SK-N-SH (cell line): ENCODE measurements at regions of chr4 and their contacts with region 1.

Region 1: GRCh38 chr4:105520817-105521790 is 31.3 kb upstream of the ARHGEF38 start:
- DNase-seq: peak; percentile 69
- H3K4me3 ChIP-seq: no peak overlapping the region; a peak in 1 of 4 replicates
- H3K27ac ChIP-seq: no peak overlapping the region
- H3K4me1 ChIP-seq: no peaks in the 10 kb centered on the region
- H3K27me3 ChIP-seq: no peaks in the 10 kb centered on the region
- CTCF ChIP-seq: peak; percentile 78
- EP300 ChIP-seq: no peak
- RAD21 ChIP-seq: peak; percentile 78

Region 2: DNA sequence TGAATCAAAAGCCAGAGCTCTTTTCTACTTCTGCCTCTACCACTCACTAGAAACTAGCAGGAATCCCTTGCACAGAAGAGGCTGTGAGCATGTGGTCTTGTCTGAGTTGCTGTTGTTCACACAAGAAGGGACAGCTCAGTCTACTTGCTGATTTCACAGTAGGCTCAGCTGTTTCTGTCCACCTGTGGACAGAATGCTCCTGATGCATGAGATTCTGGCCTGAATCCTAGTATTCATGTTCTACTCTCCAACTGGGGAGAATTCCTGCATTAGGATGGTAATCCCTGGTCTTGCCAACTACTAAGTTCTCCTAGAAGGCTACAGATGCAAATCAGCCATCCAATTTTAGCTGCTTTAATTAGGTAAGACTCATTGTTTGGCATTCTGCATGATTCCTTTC is 160.1 kb before region 1 on chr4:
- CTCF ChIA-PET with region 1: no interaction called
- POLR2A ChIA-PET with region 1: no interaction called
- DNase-seq: no peak
- H3K4me3 ChIP-seq: no peak overlapping the region
- H3K27ac ChIP-seq: no peak overlapping the region
- H3K4me1 ChIP-seq: peaks cover 0 to 10% of the 10 kb centered on the region in 2 experiments; a peak in 2 of 4 replicates
- H3K27me3 ChIP-seq: no peaks in the 10 kb centered on the region
- CTCF ChIP-seq: no peak
- EP300 ChIP-seq: no peak
- RAD21 ChIP-seq: no peak

Region 3: GRCh38 chr4:105666693-105667092 is 145.6 kb after region 1 on chr4:
- CTCF ChIA-PET with region 1: interaction called, 27 read pairs
- POLR2A ChIA-PET with region 1: no interaction called
- DNase-seq: no peak
- H3K4me3 ChIP-seq: no peak overlapping the region
- H3K27ac ChIP-seq: no peak overlapping the region
- H3K4me1 ChIP-seq: no peaks in the 10 kb centered on the region
- H3K27me3 ChIP-seq: no peaks in the 10 kb centered on the region
- CTCF ChIP-seq: peak; percentile 42
- EP300 ChIP-seq: no peak
- RAD21 ChIP-seq: peak; percentile 68

Region 4: DNA sequence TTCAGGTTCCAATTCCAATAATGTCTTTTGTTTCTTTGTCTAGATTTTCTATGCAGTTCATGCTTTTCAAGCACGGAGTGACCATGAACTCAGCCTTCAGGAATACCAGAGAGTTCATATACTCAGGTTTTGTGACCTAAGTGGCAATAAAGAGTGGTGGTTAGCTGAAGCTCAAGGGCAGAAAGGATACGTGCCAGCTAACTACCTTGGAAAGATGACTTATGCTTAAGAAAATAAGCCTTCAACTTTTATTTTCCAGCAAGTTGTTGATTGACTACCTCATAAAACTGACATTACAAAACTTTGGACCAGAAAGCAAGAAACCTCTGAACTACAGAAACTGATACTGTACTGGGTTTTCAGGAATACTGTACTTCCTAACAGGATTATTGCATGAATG is 156.6 kb after region 1 on chr4:
- CTCF ChIA-PET with region 1: interaction called, 11 read pairs
- POLR2A ChIA-PET with region 1: no interaction called
- DNase-seq: no peak
- H3K4me3 ChIP-seq: no peak overlapping the region
- H3K27ac ChIP-seq: no peak overlapping the region
- H3K4me1 ChIP-seq: 0 out of 4 replicates have a peak, but pooled peaks cover 0 to 4% of the 10 kb centered on the region in 2 experiments
- H3K27me3 ChIP-seq: no peaks in the 10 kb centered on the region
- CTCF ChIP-seq: no peak
- EP300 ChIP-seq: no peak
- RAD21 ChIP-seq: no peak

Region 5: GRCh38 chr4:105715692-105716278 is 194.7 kb after region 1 on chr4:
- CTCF ChIA-PET with region 1: interaction called, 27 read pairs
- POLR2A ChIA-PET with region 1: no interaction called
- DNase-seq: peak; percentile 17
- H3K4me3 ChIP-seq: no peak overlapping the region
- H3K27ac ChIP-seq: no peak overlapping the region
- H3K4me1 ChIP-seq: peaks cover 2 to 16% of the 10 kb centered on the region in 2 experiments; a peak in 3 of 4 replicates
- H3K27me3 ChIP-seq: no peaks in the 10 kb centered on the region
- CTCF ChIP-seq: peak; percentile 74
- EP300 ChIP-seq: no peak
- RAD21 ChIP-seq: peak; percentile 61

Region 6: GRCh38 chr4:106201373-106201772 is 680.3 kb after region 1 on chr4:
- CTCF ChIA-PET with region 1: interaction called, 10 read pairs
- POLR2A ChIA-PET with region 1: no interaction called
- DNase-seq: peak; percentile 28
- H3K4me3 ChIP-seq: no peak overlapping the region
- H3K27ac ChIP-seq: no peak overlapping the region
- H3K4me1 ChIP-seq: no peaks in the 10 kb centered on the region; a peak in 1 of 4 replicates
- H3K27me3 ChIP-seq: no peaks in the 10 kb centered on the region
- CTCF ChIP-seq: peak; percentile 69
- EP300 ChIP-seq: no peak
- RAD21 ChIP-seq: peak; percentile 80